ENCODE measurements at regions of chr16 and their contacts with region 1.

Region 1: DNA sequence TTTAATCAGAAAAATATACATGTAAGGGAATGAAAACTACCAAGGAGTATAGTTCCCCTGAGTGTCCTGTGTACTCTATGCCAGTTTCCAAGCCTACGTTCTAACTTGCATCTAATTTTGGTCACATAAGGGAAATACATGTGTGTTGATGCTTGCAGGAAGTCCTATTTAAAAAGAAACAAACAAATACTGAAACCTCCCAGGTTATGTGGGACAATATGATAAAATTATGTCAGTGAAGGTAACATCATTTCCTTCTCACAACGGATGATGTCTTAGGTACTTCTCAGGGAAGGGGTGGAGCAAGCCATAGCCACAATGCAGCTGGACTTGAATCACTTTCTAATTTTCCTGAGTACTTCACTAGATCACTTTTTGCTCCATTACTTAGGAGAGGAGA is 115.9 kb downstream of the ZFHX3 start:
- DNase-seq: no peak
- H3K4me3 ChIP-seq: no peak overlapping the region
- H3K27ac ChIP-seq: peak overlapping the region; percentile 60 to 92
- H3K4me1 ChIP-seq: peaks cover 26% of the 10 kb centered on the region
- H3K27me3 ChIP-seq: no peaks in the 10 kb centered on the region
- CTCF ChIP-seq: no peak
- POLR2A ChIP-seq: no peak

Region 2: GRCh38 chr16:72768591-72768990 is 163.5 kb before region 1 on chr16:
- intact Hi-C with region 1: no loop called
- DNase-seq: no peak
- H3K4me3 ChIP-seq: no peak overlapping the region
- H3K27ac ChIP-seq: no peak overlapping the region
- H3K4me1 ChIP-seq: no peaks in the 10 kb centered on the region
- H3K27me3 ChIP-seq: no peaks in the 10 kb centered on the region
- CTCF ChIP-seq: no peak
- POLR2A ChIP-seq: no peak

Region 3: GRCh38 chr16:72847187-72848027 is 84.6 kb before region 1 on chr16:
- intact Hi-C with region 1: loop called (anchors 5 kb)
- DNase-seq: no peak
- H3K4me3 ChIP-seq: no peak overlapping the region
- H3K27ac ChIP-seq: peak overlapping the region; percentile 71 to 72
- H3K4me1 ChIP-seq: peaks cover 19% of the 10 kb centered on the region
- H3K27me3 ChIP-seq: no peaks in the 10 kb centered on the region
- CTCF ChIP-seq: peak in 2 of 4 experiments; percentile 15 to 25
- POLR2A ChIP-seq: no peak